ENCODE measurements at regions of chr14 and their contacts with region 1.

Region 1: GRCh38 chr14:89469210-89470198 is 52.5 kb upstream of the FOXN3 start:
- DNase-seq: no peak
- ATAC-seq: peak in 1 of 2 experiments; percentile 33; a peak in 2 of 6 replicates
- H3K4me3 ChIP-seq: no peak overlapping the region
- H3K27ac ChIP-seq: no peak overlapping the region
- H3K4me1 ChIP-seq: no peaks in the 10 kb centered on the region
- CTCF ChIP-seq: no peak
- EP300 ChIP-seq: no peak
- POLR2A ChIP-seq: no peak
- RAD21 ChIP-seq: no peak

Region 2: DNA sequence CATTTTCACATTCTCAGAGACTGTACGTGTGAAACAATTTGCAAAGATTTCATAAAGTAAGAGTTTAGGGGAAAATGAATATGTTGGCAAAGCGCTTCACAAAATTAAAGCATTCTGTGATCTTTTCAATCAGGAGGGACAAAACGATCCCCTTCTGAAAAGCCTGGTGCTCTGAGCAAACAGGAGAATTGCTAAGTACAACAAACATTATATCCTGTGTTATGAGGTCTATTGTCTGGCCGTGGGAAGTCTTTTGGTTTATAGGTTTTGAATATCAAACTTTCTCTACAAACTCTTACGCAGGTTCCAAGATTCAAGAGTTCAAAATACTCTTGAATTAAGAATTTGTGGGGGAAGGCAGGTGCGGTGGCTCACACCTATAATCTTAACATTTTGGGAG is 45.3 kb before region 1 on chr14:
- CTCF ChIA-PET with region 1: no interaction called
- POLR2A ChIA-PET with region 1: interaction called, 11 read pairs
- DNase-seq: no peak
- ATAC-seq: no peak
- H3K4me3 ChIP-seq: no peak overlapping the region
- H3K27ac ChIP-seq: no peak overlapping the region
- H3K4me1 ChIP-seq: peaks cover 9% of the 10 kb centered on the region; the same call in 2 of the 3 replicates
- CTCF ChIP-seq: no peak
- EP300 ChIP-seq: no peak
- POLR2A ChIP-seq: no peak
- RAD21 ChIP-seq: no peak

Measured in A549 (cell line).